Activated CD8-positive, alpha-beta T cell treated with anti-CD3 and anti-CD28 coated beads, Interleukin-2, amount 10 ng/mL, durations not matched to agents 7 days and 5 days (primary cell): ENCODE measurements at regions of chr3 and their contacts with region 1.

Region 1: GRCh38 chr3:38496131-38496910 is at the start of gene EXOG:
- DNase-seq: peak; percentile 97
- ATAC-seq: peak; percentile 94
- H3K4me3 Mint-ChIP-seq: peak within 1 kb of the TSS; percentile 89
- H3K27ac Mint-ChIP-seq: peak within 1 kb of the TSS; percentile 86
- H3K4me1 Mint-ChIP-seq: peaks cover 26% of the 10 kb centered on the region
- H3K27me3 Mint-ChIP-seq: no peaks in the 10 kb centered on the region
- total RNA-seq, gene EXOG: 18.5 to 23.0 TPM

Region 2: GRCh38 chr3:38662544-38662943 is 166.2 kb after region 1 on chr3:
- CTCF ChIA-PET with region 1: interaction called, 12 read pairs
- POLR2A ChIA-PET with region 1: no interaction called
- DNase-seq: no peak
- ATAC-seq: no peak
- H3K4me3 Mint-ChIP-seq: no peak overlapping the region
- H3K27ac Mint-ChIP-seq: no peak overlapping the region
- H3K4me1 Mint-ChIP-seq: no peaks in the 10 kb centered on the region
- H3K27me3 Mint-ChIP-seq: peaks cover 30% of the 10 kb centered on the region